ENCODE measurements at regions of chr5 and their contacts with region 1.

Region 1: DNA sequence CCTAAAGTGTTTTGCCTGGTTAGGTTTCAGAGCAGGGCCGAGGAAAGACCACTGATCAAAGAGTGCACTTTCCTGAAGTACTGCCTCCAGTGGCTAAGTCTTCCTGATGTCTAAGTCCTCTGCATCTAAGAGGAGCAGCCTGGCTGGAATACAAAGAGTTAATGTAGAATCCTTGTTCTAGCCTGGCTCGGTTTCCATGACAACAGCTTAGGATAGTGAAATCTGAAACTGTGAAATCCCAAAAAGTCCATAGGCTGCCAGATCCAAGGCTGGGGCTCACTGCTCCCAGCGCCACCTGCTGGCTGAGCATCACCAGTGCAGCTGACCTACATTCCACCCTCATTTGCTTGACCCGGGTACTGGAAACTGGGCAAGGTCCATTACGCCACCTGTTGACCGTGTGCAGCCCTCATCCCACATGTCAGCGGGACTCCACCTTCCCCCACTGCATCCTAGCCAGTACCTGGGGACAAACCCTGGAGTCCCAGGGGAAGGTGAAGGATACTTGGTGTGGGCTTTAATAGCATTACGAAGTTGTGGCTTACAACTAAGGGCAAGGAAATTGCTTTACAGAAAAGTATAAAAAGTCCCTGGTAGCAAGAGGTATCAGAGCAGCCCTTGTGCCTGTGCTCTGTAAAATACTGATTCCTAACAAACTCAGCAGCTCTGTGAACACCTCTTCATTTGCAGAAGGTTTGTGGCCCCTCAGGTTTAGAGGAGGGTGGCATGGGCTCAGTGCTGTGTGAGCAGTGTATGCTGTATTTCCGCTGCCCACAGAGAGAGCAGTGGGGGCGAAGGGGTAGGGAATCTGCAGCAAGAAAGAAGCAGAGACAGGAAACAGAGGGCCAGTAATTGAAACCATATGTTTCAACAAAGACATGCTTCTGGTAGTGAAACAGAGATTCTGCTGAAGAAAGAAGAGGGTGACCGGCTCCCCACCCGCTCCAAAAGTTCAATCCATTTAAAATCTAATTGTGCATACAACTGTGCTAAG is 36.0 kb downstream of the PCDHGC5 start:
- DNase-seq: peak; percentile 85
- H3K4me3 ChIP-seq: no peak overlapping the region
- H3K27me3 ChIP-seq: no peaks in the 10 kb centered on the region
- CTCF ChIP-seq: peak; percentile 99

Region 2: GRCh38 chr5:141412854-141413539 is 111.9 kb before region 1 on chr5 and contains the start of gene PCDHGA10:
- CTCF ChIA-PET with region 1: interaction called, 29 read pairs
- POLR2A ChIA-PET with region 1: no interaction called
- DNase-seq: no peak
- H3K4me3 ChIP-seq: peak within 1 kb of the TSS; percentile 33
- H3K27me3 ChIP-seq: no peaks in the 10 kb centered on the region
- CTCF ChIP-seq: peak; percentile 67
- polyA plus RNA-seq, gene PCDHGA10: 2.7 and 3.9 TPM in 2 replicates

Region 3: DNA sequence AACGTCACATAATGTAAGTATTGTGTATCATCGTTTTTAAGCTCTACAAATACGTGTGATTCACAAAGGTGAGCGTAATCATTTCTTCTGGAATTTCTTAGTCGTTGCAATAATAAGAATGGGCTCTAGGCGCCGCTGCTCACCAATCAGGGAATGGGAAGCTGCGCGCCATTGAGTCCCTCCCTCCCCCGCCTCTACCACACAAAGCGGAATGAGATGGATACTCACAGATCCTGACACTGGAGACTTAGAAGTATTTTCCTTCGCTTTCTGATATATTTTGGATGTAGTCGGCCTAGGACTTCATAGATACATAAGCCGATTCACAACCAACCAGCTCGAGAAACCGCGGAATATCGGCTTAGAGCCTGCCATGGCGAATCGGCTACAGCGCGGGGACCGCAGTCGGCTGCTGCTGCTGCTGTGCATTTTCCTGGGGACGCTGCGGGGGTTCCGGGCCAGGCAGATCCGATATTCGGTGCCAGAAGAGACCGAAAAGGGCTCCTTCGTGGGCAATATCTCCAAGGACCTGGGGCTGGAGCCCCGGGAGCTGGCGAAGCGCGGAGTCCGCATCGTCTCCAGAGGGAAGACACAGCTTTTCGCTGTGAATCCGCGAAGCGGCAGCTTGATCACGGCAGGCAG is 103.9 kb before region 1 on chr5 and contains the start of gene PCDHGA11:
- CTCF ChIA-PET with region 1: interaction called, 22 read pairs
- POLR2A ChIA-PET with region 1: no interaction called
- DNase-seq: no peak
- H3K4me3 ChIP-seq: peak within 1 kb of the TSS; percentile 47
- H3K27me3 ChIP-seq: no peaks in the 10 kb centered on the region
- CTCF ChIP-seq: peak; percentile 58
- polyA plus RNA-seq, gene PCDHGA11: 5.4 and 7.4 TPM in 2 replicates

Region 4: DNA sequence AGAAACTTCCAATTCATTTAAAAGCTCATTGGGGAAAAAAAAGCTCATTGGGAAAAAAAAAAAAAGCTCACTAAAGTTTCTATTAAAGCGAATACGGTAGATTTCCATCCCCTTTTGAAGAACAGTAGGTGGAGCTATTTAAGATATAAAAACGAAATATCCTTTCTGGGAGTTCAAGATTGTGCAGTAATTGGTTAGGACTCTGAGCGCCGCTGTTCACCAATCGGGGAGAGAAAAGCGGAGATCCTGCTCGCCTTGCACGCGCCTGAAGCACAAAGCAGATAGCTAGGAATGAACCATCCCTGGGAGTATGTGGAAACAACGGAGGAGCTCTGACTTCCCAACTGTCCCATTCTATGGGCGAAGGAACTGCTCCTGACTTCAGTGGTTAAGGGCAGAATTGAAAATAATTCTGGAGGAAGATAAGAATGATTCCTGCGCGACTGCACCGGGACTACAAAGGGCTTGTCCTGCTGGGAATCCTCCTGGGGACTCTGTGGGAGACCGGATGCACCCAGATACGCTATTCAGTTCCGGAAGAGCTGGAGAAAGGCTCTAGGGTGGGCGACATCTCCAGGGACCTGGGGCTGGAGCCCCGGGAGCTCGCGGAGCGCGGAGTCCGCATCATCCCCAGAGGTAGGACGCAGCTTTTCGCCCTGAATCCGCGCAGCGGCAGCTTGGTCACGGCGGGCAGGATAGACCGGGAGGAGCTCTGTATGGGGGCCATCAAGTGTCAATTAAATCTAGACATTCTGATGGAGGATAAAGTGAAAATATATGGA is 94.4 kb before region 1 on chr5 and contains the start of gene PCDHGA12:
- CTCF ChIA-PET with region 1: interaction called, 38 read pairs
- POLR2A ChIA-PET with region 1: no interaction called
- DNase-seq: no peak
- H3K4me3 ChIP-seq: peak within 1 kb of the TSS; percentile 39
- H3K27me3 ChIP-seq: no peaks in the 10 kb centered on the region
- CTCF ChIP-seq: peak; percentile 59
- polyA plus RNA-seq, gene PCDHGA12: 6.1 and 7.9 TPM in 2 replicates

Region 5: DNA sequence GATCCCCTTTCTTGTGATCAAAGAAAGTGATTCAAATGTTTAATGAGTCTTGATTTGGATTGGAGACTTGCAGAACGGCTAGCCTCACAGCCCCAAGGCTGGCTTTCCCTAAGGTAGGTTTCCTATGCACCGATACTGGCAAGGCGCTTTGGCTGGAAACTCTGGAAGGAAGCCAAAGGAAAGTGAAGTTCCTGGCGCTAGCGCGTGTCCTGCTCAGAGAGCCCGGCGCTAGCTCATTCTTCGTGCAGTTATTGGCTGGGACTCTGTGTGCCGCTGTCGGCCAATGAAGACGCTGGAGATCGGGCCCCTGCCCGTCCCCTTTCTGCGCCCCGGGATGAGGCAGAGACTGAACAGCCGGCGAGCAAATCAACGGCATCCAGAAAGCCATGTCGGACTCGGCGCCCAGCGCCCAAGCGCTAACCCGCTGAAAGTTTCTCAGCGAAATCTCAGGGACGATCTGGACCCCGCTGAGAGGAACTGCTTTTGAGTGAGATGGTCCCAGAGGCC is 49.2 kb before region 1 on chr5 and contains the start of gene PCDHGC3:
- CTCF ChIA-PET with region 1: interaction called, 46 read pairs
- POLR2A ChIA-PET with region 1: no interaction called
- DNase-seq: peak; percentile 64
- H3K4me3 ChIP-seq: peak within 1 kb of the TSS; percentile 53
- H3K27me3 ChIP-seq: no peaks in the 10 kb centered on the region
- CTCF ChIP-seq: 0 out of 2 replicates have a peak, but pooled peaks have one; percentile 12
- polyA plus RNA-seq, gene PCDHGC3: 36.5 and 56.3 TPM in 2 replicates

Region 6: DNA sequence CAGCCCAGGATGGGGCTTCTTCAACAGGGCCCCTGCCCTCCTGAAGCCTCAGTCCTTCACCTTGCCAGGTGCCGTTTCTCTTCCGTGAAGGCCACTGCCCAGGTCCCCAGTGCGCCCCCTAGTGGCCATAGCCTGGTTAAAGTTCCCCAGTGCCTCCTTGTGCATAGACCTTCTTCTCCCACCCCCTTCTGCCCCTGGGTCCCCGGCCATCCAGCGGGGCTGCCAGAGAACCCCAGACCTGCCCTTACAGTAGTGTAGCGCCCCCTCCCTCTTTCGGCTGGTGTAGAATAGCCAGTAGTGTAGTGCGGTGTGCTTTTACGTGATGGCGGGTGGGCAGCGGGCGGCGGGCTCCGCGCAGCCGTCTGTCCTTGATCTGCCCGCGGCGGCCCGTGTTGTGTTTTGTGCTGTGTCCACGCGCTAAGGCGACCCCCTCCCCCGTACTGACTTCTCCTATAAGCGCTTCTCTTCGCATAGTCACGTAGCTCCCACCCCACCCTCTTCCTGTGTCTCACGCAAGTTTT is 12.5 kb before region 1 on chr5:
- CTCF ChIA-PET with region 1: interaction called, 170 read pairs
- POLR2A ChIA-PET with region 1: interaction called, 8 read pairs
- DNase-seq: no peak
- H3K4me3 ChIP-seq: peak overlapping the region; percentile 39
- H3K27me3 ChIP-seq: no peaks in the 10 kb centered on the region
- CTCF ChIP-seq: peak; percentile 90

Measured in BJ (cell line).